Activated CD4-positive, alpha-beta T cell treated with anti-CD3 and anti-CD28 coated beads for 36 hours (primary cell): ENCODE measurements at regions of chr2 and their contacts with region 1.

Region 1: GRCh38 chr2:68766376-68766845 is 31.8 kb downstream of the ARHGAP25 start:
- DNase-seq: peak; percentile 79
- ATAC-seq: peak; percentile 67
- H3K4me3 Mint-ChIP-seq: peak overlapping the region; percentile 72
- H3K27ac Mint-ChIP-seq: peak overlapping the region; percentile 99
- H3K4me1 Mint-ChIP-seq: peaks cover 98% of the 10 kb centered on the region
- H3K27me3 Mint-ChIP-seq: no peaks in the 10 kb centered on the region

Region 2: DNA sequence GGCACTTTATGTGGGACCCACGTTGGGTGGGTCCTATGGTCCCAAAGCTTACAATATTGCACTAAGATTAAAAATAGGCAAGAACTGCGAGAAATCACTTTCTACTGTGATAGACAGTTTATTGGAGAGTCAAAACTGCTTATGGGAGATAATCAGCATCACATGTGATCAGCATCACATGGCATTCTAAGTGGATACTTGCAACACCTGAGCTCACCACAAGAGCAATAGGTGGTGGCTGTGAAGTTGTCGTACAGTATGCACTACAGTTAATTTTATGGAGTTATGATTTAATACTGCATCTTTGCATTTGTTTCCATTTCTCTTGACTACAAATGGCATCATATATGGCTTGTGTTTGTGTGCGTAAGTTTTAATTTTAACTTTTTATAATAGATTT is 597.1 kb before region 1 on chr2:
- CTCF ChIA-PET with region 1: no interaction called
- POLR2A ChIA-PET with region 1: no interaction called
- intact Hi-C with region 1: no loop called
- DNase-seq: no peak
- ATAC-seq: peak; percentile 62
- H3K4me3 Mint-ChIP-seq: no peak overlapping the region
- H3K27ac Mint-ChIP-seq: no peak overlapping the region
- H3K4me1 Mint-ChIP-seq: peaks cover 9% of the 10 kb centered on the region
- H3K27me3 Mint-ChIP-seq: no peaks in the 10 kb centered on the region

Region 3: GRCh38 chr2:68396093-68396492 is 370.3 kb before region 1 on chr2:
- CTCF ChIA-PET with region 1: no interaction called
- POLR2A ChIA-PET with region 1: no interaction called
- intact Hi-C with region 1: no loop called
- DNase-seq: no peak
- ATAC-seq: no peak
- H3K4me3 Mint-ChIP-seq: no peak overlapping the region
- H3K27ac Mint-ChIP-seq: no peak overlapping the region
- H3K4me1 Mint-ChIP-seq: no peaks in the 10 kb centered on the region
- H3K27me3 Mint-ChIP-seq: peaks cover 10% of the 10 kb centered on the region

Region 4: DNA sequence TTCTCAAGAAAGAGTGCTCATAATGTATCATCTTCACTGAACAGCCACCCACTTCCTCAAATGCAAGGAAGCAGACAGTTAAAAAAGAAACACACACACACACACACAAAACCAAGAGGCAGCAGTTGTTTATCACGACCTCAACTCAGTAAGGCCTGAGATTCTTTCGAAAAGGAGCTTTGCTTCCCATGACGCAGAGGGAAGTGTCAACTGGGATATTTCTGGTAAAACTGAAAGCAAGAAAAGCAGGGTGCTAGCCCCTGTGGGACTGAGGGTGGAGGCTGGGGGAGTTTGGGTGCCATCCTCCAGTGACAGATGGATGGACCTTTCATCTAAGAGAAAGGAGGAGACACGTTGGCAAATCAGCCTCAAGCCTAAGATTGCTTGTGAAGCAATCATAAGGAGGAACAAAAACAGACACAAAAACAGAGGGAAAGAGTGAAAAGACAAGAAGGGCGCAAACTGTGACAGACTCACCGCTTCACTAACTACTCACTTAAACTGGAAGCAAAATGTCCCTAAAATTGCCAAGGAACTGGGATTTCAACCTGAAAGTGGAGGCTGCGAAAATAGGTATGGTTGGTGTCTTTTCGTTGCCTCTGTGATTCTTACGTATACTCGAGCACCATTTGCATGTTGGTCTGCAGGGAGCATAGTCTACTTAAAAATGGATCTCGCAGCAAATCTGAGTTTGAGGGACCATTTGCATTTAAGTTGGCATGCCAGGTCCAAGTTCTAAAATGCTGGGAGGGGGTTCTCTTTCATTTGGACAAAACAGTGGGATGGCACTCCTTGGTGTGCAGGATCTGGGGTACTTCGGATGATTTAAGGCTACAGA is 31.5 kb before region 1 on chr2 and contains the start of gene ARHGAP25:
- CTCF ChIA-PET with region 1: interaction called, 9 read pairs
- POLR2A ChIA-PET with region 1: interaction called, 7 read pairs
- intact Hi-C with region 1: loop called (anchors 1 to 2 kb)
- DNase-seq: peak; percentile 84
- ATAC-seq: peak; percentile 75
- H3K4me3 Mint-ChIP-seq: no peak within 1 kb of the TSS
- H3K27ac Mint-ChIP-seq: no peak within 1 kb of the TSS
- H3K4me1 Mint-ChIP-seq: peaks cover 40% of the 10 kb centered on the region
- H3K27me3 Mint-ChIP-seq: no peaks in the 10 kb centered on the region
- total RNA-seq, gene ARHGAP25: 57.9 to 73.2 TPM

Region 5: DNA sequence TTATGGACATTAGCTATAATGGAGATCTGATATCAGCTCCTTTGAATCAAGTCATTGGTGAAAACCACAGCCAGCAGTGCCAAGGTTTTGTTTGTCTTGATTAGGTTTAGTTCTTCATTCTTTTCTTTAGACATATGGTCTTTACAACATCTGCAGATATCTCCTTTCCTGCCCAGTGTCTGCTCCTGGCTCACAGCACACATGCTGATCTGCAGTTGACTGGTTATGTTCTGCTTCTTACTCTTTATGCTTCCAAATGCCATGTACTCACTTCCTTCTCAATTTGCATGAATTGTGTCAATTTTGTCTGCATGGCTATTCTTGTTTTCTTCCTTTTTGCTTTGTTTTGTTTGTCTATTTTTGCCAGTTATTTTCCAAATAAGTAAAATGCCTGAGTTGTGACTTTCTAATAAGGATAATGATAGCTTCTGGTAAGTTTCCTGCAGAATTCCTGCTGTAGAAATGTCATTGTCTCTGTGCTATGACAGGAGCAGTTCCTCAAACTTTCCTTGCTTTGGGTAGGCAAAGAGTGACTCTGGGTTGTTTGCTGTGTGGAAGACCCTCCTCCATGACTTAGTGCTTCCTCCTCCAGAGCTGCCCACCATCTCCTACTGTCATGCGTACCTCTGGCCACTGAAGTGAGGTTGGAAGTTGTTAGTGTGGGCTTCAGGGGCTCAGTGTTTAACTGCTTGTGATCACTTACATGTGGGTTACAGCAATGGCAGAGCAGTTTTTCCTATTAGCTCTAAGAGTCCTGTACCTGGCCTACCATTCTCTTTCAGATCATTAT is 23.6 kb before region 1 on chr2:
- CTCF ChIA-PET with region 1: interaction called, 21 read pairs
- POLR2A ChIA-PET with region 1: interaction called, 4 read pairs
- intact Hi-C with region 1: loop called in 1 of 2 experiments (anchors 1 kb)
- DNase-seq: no peak
- ATAC-seq: no peak
- H3K4me3 Mint-ChIP-seq: peak overlapping the region; percentile 33
- H3K27ac Mint-ChIP-seq: peak overlapping the region; percentile 80
- H3K4me1 Mint-ChIP-seq: peaks cover 97% of the 10 kb centered on the region
- H3K27me3 Mint-ChIP-seq: no peaks in the 10 kb centered on the region

Region 6: GRCh38 chr2:68751397-68752339 is 14.7 kb before region 1 on chr2:
- CTCF ChIA-PET with region 1: interaction called, 81 read pairs
- POLR2A ChIA-PET with region 1: interaction called, 4 read pairs
- intact Hi-C with region 1: loop called (anchors 1 kb)
- DNase-seq: peak; percentile 96
- ATAC-seq: peak; percentile 93
- H3K4me3 Mint-ChIP-seq: peak overlapping the region; percentile 20
- H3K27ac Mint-ChIP-seq: peak overlapping the region; percentile 84
- H3K4me1 Mint-ChIP-seq: peaks cover 87% of the 10 kb centered on the region
- H3K27me3 Mint-ChIP-seq: no peaks in the 10 kb centered on the region

Region 7: GRCh38 chr2:68909793-68910674 is 143.6 kb after region 1 on chr2:
- CTCF ChIA-PET with region 1: interaction called, 4 read pairs
- POLR2A ChIA-PET with region 1: no interaction called
- intact Hi-C with region 1: loop called (anchors 2 to 5 kb)
- DNase-seq: peak; percentile 88
- ATAC-seq: peak; percentile 20
- H3K4me3 Mint-ChIP-seq: no peak overlapping the region
- H3K27ac Mint-ChIP-seq: peak overlapping the region; percentile 69
- H3K4me1 Mint-ChIP-seq: peaks cover 36% of the 10 kb centered on the region
- H3K27me3 Mint-ChIP-seq: no peaks in the 10 kb centered on the region

Region 8: GRCh38 chr2:69386789-69387734 is 620.7 kb after region 1 on chr2 and contains the start of gene GFPT1:
- CTCF ChIA-PET with region 1: no interaction called
- POLR2A ChIA-PET with region 1: no interaction called
- intact Hi-C with region 1: loop called in 1 of 2 experiments (anchors 10 kb)
- DNase-seq: peak; percentile 96
- ATAC-seq: peak; percentile 96
- H3K4me3 Mint-ChIP-seq: peak within 1 kb of the TSS; percentile 81
- H3K27ac Mint-ChIP-seq: peak within 1 kb of the TSS; percentile 92
- H3K4me1 Mint-ChIP-seq: peaks cover 45% of the 10 kb centered on the region
- H3K27me3 Mint-ChIP-seq: no peaks in the 10 kb centered on the region
- total RNA-seq, gene GFPT1: 31.0 to 36.1 TPM

Region 9: DNA sequence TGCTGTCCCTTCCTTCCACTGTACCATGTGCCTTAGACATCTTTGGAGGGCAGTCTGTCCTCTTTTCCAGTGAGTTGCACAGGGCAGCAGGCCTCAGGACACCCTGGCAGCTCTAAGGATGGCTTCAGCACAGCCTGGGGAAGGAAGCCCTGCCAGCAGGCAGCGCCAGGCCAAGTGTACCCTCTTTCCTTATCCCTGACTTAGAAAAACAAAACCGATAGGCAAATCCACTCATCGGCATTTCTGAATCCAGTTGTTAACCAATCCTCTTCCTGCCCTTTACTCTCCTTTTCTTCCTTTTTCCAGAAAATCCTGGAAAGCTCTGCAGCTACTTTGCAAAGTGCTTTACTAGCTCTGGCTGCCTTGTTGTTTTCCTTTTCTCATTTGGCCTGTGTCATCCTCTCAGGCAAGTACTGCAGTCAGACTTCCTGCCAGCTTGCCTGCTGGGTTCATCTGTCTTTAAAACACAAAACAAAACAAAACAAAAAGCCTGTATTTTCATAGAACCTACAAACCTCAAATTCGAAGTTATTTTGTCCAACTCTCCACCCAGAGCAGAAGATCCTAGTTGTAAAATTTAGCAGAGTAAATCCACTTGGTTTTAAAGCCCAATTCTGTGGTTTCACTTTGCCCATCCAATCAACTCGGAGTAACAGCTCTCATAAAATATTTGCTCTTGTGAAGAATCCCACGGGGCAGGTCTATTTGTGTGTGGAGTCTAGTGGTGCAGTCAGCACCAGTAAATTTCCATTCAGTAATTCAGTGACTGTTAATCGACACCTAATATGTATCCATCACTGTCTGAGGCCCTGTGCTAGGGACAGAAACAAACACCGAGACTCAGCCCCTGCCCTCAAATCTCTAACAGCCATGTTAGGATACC is 1366.1 kb after region 1 on chr2:
- CTCF ChIA-PET with region 1: no interaction called
- POLR2A ChIA-PET with region 1: no interaction called
- intact Hi-C with region 1: loop called in 1 of 2 experiments (anchors 10 kb)
- DNase-seq: peak; percentile 59
- ATAC-seq: peak; percentile 34
- H3K4me3 Mint-ChIP-seq: peak overlapping the region; percentile 86
- H3K27ac Mint-ChIP-seq: peak overlapping the region; percentile 100
- H3K4me1 Mint-ChIP-seq: peaks cover 74% of the 10 kb centered on the region
- H3K27me3 Mint-ChIP-seq: no peaks in the 10 kb centered on the region